ENCODE measurements at regions of chr15 and their contacts with region 1.

Region 1: DNA sequence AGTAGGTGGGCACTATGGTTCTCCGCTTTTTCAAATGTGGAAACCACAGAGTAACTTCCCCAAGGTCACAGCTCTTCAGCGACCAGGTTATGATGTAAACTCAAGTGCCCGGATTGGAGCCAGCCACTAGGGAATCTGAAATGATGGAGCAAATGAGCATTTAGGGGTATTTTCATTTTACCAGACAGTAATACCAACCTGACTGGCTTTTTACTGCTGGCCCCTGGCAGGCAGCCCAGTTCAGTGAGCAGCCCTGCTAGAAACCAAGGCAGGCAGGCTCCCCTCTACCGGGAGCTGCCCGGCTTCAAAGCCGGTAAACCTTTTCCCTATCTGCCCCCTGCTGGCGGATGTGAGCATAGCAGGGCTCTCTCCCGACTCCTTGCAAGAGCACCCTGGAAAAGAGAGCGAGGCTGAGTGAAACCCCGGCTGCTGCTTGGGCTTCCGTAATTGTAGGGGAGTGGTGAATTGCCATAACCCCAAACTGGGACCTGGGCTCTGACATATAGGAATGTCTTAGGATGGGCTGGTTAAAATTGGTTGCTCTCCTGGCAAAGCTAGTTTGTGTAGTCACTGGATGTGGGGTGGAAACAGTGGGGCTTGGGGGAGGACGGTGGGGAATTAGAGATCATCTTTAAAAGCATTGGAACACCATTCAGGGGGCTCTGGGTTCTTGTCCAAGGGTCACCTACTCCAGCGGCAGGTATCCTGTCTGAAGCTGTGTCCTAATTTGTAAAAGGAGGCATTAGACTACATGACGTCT is 98.0 kb upstream of the TNFAIP8L3 start:
- DNase-seq: peak; percentile 79
- H3K4me3 Mint-ChIP-seq: no peak overlapping the region
- H3K27ac Mint-ChIP-seq: no peak overlapping the region
- H3K4me1 Mint-ChIP-seq: no peaks in the 10 kb centered on the region
- H3K27me3 Mint-ChIP-seq: peaks cover 28% of the 10 kb centered on the region

Region 2: DNA sequence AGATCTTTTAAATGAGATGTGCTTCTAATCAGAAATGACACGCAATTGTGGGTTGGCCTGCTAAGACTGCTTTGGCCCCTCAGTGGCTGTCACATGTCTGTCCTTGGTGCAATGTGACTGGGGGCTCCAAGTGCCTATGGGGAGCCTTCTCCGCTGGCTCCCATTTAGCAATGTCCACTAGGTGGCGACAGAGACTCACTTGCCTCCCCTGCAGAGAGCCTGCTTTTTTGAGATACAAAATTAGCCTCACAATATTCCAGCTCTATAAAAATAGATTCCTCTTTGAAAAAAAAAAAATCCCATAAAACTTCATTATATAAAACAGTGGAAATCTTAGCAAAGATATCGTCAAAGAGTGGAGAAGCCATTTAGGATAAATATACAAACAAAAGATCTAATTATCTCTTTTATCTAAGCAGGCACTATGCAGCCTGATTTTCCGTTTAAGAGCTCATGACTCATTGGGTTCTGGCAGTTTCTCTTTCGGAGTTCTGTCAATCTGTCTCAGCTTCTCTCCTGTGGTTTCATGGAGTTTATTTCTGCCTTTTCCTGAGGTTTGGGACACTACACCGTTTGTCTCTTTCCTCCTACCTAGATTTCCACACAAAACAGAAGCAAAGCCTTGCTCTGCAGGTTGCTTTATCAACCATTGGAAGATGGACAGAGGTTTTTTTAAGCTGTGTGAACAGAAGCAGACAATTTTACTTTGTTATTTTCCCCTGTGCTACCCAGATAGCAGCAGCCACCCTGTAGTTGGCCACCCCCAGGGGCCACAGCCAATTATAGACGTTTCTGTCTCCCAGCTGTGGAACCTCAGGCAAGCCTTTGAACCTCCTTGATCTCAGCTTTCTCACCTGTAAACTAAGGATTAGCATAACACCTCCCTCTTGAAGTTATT is 29.6 kb before region 1 on chr15:
- CTCF ChIA-PET with region 1: interaction called, 10 read pairs
- POLR2A ChIA-PET with region 1: no interaction called
- DNase-seq: peak; percentile 66
- H3K4me3 Mint-ChIP-seq: no peak overlapping the region
- H3K27ac Mint-ChIP-seq: no peak overlapping the region
- H3K4me1 Mint-ChIP-seq: peaks cover 2% of the 10 kb centered on the region
- H3K27me3 Mint-ChIP-seq: peaks cover 7% of the 10 kb centered on the region

Region 3: DNA sequence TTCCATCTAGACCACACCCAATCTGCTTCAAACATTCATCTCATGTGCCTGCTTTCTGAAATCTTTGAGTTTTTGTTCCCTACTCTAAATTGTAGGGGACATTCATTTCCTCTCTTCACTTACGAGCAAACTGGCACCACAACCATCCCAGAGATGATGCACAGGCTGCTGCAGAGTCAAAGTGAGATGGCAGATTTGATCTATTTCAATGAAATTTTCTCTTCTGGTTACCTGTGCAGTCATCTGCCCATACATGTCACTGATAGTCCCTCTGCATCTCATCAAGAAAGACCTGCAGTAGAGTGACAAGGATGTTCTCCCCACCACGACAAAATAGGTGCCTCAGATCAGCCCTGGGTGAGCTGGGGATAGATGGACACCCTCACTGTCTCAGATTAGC is 20.2 kb after region 1 on chr15:
- CTCF ChIA-PET with region 1: no interaction called
- POLR2A ChIA-PET with region 1: no interaction called
- DNase-seq: no peak
- H3K4me3 Mint-ChIP-seq: no peak overlapping the region
- H3K27ac Mint-ChIP-seq: no peak overlapping the region
- H3K4me1 Mint-ChIP-seq: no peaks in the 10 kb centered on the region
- H3K27me3 Mint-ChIP-seq: peaks cover 18% of the 10 kb centered on the region

Region 4: GRCh38 chr15:51484781-51485180 is 292.1 kb after region 1 on chr15:
- CTCF ChIA-PET with region 1: no interaction called
- POLR2A ChIA-PET with region 1: no interaction called
- DNase-seq: no peak
- H3K4me3 Mint-ChIP-seq: no peak overlapping the region
- H3K27ac Mint-ChIP-seq: no peak overlapping the region
- H3K4me1 Mint-ChIP-seq: no peaks in the 10 kb centered on the region
- H3K27me3 Mint-ChIP-seq: no peaks in the 10 kb centered on the region